Activated CD4-positive, alpha-beta memory T cell treated with anti-CD3 and anti-CD28 coated beads for 36 hours (primary cell): ENCODE measurements at regions of chr5 and their contacts with region 1.

Region 1: DNA sequence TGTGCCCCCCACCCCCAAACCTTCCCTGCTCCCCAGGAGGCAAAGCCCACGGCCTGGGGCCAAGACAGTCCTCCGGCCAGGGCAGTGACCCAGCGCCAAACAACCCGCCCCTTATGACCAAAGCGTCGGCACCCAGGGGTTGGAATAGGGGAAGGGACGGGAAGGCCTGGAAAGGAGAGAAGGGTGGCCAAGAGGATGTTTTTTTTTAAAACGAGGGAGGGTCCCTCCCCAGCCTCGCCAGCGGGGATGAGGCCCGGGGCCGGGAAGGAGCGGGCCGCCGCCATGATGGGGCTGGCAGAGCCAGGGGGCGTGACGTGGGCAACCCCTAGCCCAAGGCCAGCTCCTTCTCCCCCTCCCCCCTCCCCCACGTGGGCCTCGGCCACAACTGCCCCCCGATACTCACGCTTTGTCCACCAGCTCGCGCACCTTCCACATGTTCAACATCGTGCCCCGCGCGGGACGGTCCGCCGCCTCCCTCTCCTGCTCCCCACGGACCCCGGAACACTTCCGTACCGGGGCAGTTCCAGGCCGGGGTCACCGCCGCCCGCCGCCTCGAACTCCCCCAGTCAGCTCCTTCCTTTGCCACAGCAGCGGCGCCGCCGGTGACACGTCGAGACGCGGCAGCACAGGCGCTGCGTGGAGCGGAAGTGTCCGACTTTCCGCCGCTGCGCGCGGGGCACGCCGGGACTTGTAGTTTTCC is at the start of gene CLINT1:
- DNase-seq: peak; percentile 92
- H3K4me3 Mint-ChIP-seq: peak within 1 kb of the TSS; percentile 91
- H3K27ac Mint-ChIP-seq: peak within 1 kb of the TSS; percentile 96
- H3K4me1 Mint-ChIP-seq: peaks cover 73% of the 10 kb centered on the region
- H3K27me3 Mint-ChIP-seq: no peaks in the 10 kb centered on the region
- total RNA-seq, gene CLINT1: 48.7 to 49.4 TPM

Region 2: DNA sequence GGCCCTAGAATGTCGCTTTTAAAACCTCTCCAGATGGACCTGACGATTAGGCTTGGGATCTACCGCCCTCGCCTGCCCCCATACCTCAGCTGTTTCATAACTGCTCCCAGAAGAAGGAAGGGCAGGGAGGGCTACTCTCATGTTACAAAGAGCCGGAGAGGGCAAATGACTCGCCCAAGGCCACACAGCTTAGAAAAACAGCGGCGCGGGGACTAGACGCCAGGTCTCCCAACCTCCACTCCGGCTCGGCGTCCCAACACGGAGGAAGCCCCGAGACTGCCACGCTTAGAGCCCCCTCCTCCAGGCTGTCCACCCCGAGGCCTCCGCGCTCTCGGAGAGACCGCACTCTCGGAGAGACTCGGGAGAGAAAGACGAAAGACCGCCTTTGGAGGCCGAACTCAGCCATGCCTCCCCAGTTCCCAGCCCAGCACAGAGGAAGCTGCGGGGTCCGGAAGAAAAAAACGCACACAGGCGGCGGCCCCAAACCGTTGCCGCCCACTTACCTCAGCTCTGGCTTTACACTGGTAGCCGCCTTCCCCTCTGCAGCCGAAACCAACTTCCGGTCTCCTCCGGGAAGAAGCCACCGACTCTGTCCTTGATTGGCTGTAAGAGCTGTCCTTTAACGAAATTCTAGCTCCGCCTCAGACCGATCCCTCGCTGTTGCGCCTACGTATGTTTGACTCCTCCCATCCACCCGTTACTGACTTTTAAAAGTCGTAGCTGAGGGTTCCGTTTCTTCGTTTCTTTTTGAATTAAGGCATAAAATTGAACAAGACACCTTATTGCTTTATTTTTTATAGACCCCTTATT is 716.2 kb before region 1 on chr5 and contains the start of gene MED7:
- CTCF ChIA-PET with region 1: no interaction called
- POLR2A ChIA-PET with region 1: no interaction called
- intact Hi-C with region 1: loop called (anchors 10 kb)
- DNase-seq: peak; percentile 96
- H3K4me3 Mint-ChIP-seq: peak within 1 kb of the TSS; percentile 96
- H3K27ac Mint-ChIP-seq: peak within 1 kb of the TSS; percentile 99
- H3K4me1 Mint-ChIP-seq: peaks cover 49% of the 10 kb centered on the region
- H3K27me3 Mint-ChIP-seq: no peaks in the 10 kb centered on the region
- total RNA-seq, gene MED7: 17.2 to 19.2 TPM

Region 3: DNA sequence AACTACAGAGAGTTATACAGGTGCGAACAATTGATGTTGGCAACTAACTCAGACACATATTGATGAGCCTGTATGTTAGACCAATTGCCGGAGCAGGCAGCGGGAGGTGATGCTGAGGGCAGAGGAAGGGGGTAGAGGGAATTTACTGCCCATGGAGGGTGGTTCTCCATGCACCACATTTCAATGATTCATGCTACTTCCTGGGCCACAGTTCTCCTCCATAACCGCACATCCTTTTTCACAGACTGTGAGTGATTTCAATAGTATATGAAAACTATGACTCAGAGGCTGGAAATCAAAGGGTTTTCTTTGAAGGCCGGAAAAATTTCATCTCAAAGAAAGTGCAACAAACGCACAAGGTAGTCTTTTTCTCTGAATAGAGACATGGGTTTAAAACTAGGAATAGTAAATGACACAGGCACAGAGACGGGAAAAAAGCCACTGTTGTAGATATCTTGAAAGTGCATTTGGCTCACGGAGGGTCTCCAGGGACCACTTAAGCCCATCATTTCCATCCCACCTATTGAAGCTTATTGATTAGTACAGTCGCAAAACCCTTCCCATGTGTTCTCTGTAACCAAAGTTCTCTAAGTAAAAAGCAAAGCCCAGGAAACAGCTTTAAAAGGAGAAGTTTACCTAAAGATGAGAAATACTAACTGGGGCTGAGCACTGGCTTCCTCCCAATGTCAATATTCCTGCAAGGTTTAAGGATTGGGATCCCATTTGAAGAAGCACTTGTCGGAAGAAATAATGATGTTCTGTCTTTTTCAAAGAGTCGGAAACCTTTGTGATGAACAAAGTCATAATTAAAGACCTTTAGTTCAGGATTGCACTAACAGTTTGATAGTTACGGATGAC is 255.1 kb before region 1 on chr5:
- CTCF ChIA-PET with region 1: no interaction called
- POLR2A ChIA-PET with region 1: no interaction called
- intact Hi-C with region 1: loop called (anchors 1 kb)
- DNase-seq: peak; percentile 83
- H3K4me3 Mint-ChIP-seq: peak overlapping the region; percentile 18
- H3K27ac Mint-ChIP-seq: peak overlapping the region; percentile 90
- H3K4me1 Mint-ChIP-seq: peaks cover 93% of the 10 kb centered on the region
- H3K27me3 Mint-ChIP-seq: no peaks in the 10 kb centered on the region

Region 4: GRCh38 chr5:157820593-157821252 is 38.0 kb before region 1 on chr5:
- CTCF ChIA-PET with region 1: interaction called, 7 read pairs
- POLR2A ChIA-PET with region 1: no interaction called
- intact Hi-C with region 1: loop called (anchors 2 kb)
- DNase-seq: no peak
- H3K4me3 Mint-ChIP-seq: no peak overlapping the region
- H3K27ac Mint-ChIP-seq: no peak overlapping the region
- H3K4me1 Mint-ChIP-seq: peaks cover 25% of the 10 kb centered on the region
- H3K27me3 Mint-ChIP-seq: no peaks in the 10 kb centered on the region

Region 5: GRCh38 chr5:157892974-157893373 is 34.3 kb after region 1 on chr5:
- CTCF ChIA-PET with region 1: interaction called, 9 read pairs
- POLR2A ChIA-PET with region 1: interaction called, 7 read pairs
- intact Hi-C with region 1: loop called (anchors 1 kb)
- DNase-seq: peak; percentile 18
- H3K4me3 Mint-ChIP-seq: no peak overlapping the region
- H3K27ac Mint-ChIP-seq: no peak overlapping the region
- H3K4me1 Mint-ChIP-seq: peaks cover 19% of the 10 kb centered on the region
- H3K27me3 Mint-ChIP-seq: no peaks in the 10 kb centered on the region

Region 6: GRCh38 chr5:157948738-157949410 is 90.2 kb after region 1 on chr5:
- CTCF ChIA-PET with region 1: interaction called, 29 read pairs
- POLR2A ChIA-PET with region 1: no interaction called
- intact Hi-C with region 1: loop called (anchors 1 kb)
- DNase-seq: peak; percentile 85
- H3K4me3 Mint-ChIP-seq: no peak overlapping the region
- H3K27ac Mint-ChIP-seq: no peak overlapping the region
- H3K4me1 Mint-ChIP-seq: peaks cover 4% of the 10 kb centered on the region
- H3K27me3 Mint-ChIP-seq: peaks cover 6% of the 10 kb centered on the region